Aorta (tissue), 5 donors: ENCODE measurements at regions of chr6 and their contacts with region 1.

Region 1: GRCh38 chr6:87929843-87930288 is 117.8 kb upstream of the SPACA1 start:
- DNase-seq: peak; percentile 86 to 88
- ATAC-seq: peak; percentile 95
- H3K4me3 ChIP-seq: no peak overlapping the region
- H3K27ac ChIP-seq: no peak overlapping the region
- H3K4me1 ChIP-seq: no peaks in the 10 kb centered on the region
- H3K27me3 ChIP-seq: no peaks in the 10 kb centered on the region

Region 2: DNA sequence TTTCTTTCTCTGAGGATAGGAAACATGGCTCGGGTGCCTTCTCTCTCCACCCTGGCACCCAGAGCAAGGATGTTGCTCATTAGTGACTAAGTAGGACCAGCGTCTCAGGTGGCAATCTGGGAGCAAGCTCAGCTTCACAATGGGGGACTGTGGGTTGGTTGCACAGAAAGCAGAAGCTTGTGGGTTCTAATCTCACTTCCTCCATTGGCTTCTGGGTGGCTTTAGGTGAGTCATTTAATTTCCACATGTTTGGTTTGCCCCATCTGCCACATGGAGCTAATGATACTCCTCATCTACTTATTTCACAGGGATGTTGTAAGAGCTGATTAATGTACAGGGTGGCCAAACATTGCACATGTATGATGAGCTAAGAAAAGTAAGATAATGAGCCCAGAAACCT is 173.0 kb before region 1 on chr6:
- intact Hi-C with region 1: no loop called
- DNase-seq: no peak
- ATAC-seq: peak; percentile 66
- H3K4me3 ChIP-seq: no peak overlapping the region
- H3K27ac ChIP-seq: no peak overlapping the region
- H3K4me1 ChIP-seq: peaks cover 0 to 4% of the 10 kb centered on the region in 2 donors
- H3K27me3 ChIP-seq: no peaks in the 10 kb centered on the region

Region 3: GRCh38 chr6:88492824-88493223 is 563.0 kb after region 1 on chr6:
- intact Hi-C with region 1: loop called (anchors 5 to 10 kb)
- DNase-seq: no peak
- ATAC-seq: no peak
- H3K4me3 ChIP-seq: no peak overlapping the region
- H3K27ac ChIP-seq: no peak overlapping the region
- H3K4me1 ChIP-seq: no peaks in the 10 kb centered on the region
- H3K27me3 ChIP-seq: no peaks in the 10 kb centered on the region

Region 4: GRCh38 chr6:88780714-88781389 is 851.0 kb after region 1 on chr6:
- intact Hi-C with region 1: loop called (anchors 2 to 5 kb)
- DNase-seq: no peak
- ATAC-seq: peak; percentile 82
- H3K4me3 ChIP-seq: no peak overlapping the region
- H3K27ac ChIP-seq: no peak overlapping the region
- H3K4me1 ChIP-seq: no peaks in the 10 kb centered on the region
- H3K27me3 ChIP-seq: no peaks in the 10 kb centered on the region

Region 5: GRCh38 chr6:88870717-88871330 is 941.0 kb after region 1 on chr6:
- intact Hi-C with region 1: loop called (anchors 5 kb)
- DNase-seq: no peak
- ATAC-seq: peak; percentile 83
- H3K4me3 ChIP-seq: no peak overlapping the region
- H3K27ac ChIP-seq: no peak overlapping the region
- H3K4me1 ChIP-seq: peaks cover 0 to 9% of the 10 kb centered on the region in 2 donors
- H3K27me3 ChIP-seq: no peaks in the 10 kb centered on the region